H1 (cell line): ENCODE measurements at regions of chr1 and their contacts with region 1.

Region 1: DNA sequence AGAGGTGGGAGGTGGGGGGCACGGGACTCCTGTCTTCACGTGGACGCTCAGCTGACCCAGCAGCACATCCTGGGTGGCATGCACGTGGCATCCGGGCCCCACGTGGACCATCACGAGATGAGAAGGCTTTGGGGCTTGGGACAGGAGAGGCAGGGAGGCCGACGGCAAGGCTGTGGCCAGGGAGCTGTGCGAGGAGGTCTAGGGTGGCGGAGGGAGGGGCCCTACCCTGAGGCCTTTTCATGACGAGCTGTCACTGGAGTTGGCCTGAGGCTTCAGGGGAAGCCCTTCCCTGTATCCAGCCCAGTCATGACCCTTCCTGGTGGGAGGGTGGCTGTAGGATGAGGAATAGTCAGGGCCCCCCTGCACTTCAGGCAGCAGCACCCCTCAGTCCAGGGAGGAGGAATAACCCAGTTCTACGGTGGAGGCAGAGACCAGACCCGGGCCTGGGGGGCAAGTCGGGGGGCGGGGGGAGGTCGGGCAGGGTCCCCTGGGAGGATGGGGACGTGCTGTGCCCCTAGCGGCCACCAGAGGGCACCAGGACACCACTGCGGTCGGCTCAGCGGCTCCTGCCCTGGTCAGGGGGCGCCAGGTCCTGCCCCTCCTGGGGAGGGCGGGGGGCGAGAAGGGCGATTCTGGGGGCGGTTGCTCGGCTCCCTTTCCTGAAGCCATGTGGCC is 2.0 kb upstream of the PERM1 start:
- DNase-seq: peak in 1 of 2 experiments; percentile 92
- H3K4me3 ChIP-seq: no peak overlapping the region
- H3K27ac ChIP-seq: no peak overlapping the region
- H3K4me1 ChIP-seq: no peaks in the 10 kb centered on the region; a peak in 1 of 7 replicates
- H3K27me3 ChIP-seq: peaks cover 0 to 29% (median 17%) of the 10 kb centered on the region in 4 experiments; a peak in 6 of 7 replicates
- CTCF ChIP-seq: peak in 2 of 3 experiments; percentile 59 to 84; a peak in 3 of 4 replicates
- EP300 ChIP-seq: no peak
- POLR2A ChIP-seq: no peak
- RAD21 ChIP-seq: peak; percentile 80 to 83

Region 2: DNA sequence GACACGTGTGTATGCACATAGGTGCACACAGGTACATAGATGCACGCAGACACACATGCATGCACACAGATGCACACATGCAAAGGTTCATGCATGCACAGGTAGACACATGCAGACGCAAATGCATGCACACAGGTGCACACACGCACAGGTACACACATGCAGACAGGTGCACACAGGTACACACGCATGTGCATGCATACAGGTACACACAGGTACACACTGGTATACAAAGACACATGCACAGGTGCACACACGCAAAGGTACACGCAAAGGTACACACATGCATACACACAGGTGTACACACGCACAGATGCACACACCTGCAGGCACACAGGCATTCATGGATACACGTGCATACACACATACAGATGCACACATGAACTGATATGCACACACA is 33.7 kb before region 1 on chr1:
- CTCF ChIA-PET with region 1: no interaction called
- POLR2A ChIA-PET with region 1: no interaction called
- DNase-seq: no peak
- H3K4me3 ChIP-seq: no peak overlapping the region
- H3K27ac ChIP-seq: no peak overlapping the region
- H3K4me1 ChIP-seq: no peaks in the 10 kb centered on the region; a peak in 1 of 7 replicates
- H3K27me3 ChIP-seq: no peaks in the 10 kb centered on the region
- CTCF ChIP-seq: no peak
- EP300 ChIP-seq: no peak
- POLR2A ChIP-seq: no peak
- RAD21 ChIP-seq: no peak

Region 3: GRCh38 chr1:999725-1000356 is 15.9 kb after region 1 on chr1 and contains the start of gene HES4:
- CTCF ChIA-PET with region 1: interaction called, 86 read pairs
- POLR2A ChIA-PET with region 1: interaction called, 9 read pairs
- DNase-seq: peak in 1 of 2 experiments; percentile 93
- H3K4me3 ChIP-seq: peak within 1 kb of the TSS; percentile 34 to 77 (median 48)
- H3K27ac ChIP-seq: no peak within 1 kb of the TSS
- H3K4me1 ChIP-seq: peaks cover 0 to 31% (median 15%) of the 10 kb centered on the region in 4 experiments; a peak in 6 of 7 replicates
- H3K27me3 ChIP-seq: peaks cover 47 to 89% (median 73%) of the 10 kb centered on the region in 4 experiments
- CTCF ChIP-seq: no peak
- EP300 ChIP-seq: no peak
- POLR2A ChIP-seq: no peak
- RAD21 ChIP-seq: no peak
- total RNA-seq, gene HES4: 1.2 and 2.8 TPM in 2 replicates

Region 4: DNA sequence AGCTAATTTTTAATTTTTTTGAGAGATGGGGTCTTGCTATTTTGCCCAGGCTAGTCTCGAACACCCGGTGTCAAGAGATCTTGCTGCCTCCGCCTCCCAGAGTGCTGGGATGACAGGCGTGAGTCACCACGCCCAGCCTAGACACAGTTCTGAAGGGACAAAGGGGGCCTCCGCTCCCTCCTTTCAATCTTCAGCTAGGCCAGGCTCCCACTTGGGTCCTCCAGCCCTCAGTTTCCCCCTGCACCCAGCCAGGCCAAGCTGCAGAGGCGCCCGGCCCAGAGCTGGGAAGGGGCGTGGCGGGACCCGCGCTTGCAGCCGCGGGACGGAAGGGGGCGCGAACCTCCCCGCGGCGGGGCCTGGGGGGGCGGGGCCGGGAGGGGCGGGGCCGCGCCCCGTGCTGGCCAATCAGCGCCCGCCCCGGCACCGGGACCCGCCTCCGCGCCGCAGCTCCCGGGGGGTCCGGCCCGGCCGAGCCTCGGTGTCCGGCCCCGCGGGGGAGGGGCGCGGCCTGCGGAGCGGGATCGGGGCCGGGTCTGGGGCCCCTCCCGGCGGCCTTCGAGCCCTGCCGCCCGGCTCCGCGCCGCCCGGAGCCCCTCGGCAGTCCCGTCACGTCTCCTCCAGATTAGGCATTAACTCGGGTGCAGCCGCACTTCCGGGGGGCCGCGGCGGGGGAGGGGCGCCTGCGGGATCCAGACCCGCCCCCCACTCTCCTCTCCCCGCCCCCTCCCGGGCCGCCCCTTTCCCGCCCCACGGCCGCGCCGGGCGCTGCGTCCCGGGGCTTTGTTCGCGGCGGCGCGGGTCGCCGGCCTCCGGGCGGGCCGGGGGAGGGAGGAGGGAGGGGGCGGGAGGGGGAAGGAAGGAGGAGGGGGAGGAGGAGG is 35.4 kb after region 1 on chr1:
- CTCF ChIA-PET with region 1: interaction called, 74 read pairs
- POLR2A ChIA-PET with region 1: interaction called, 4 read pairs
- DNase-seq: peak in 1 of 2 experiments; percentile 84
- H3K4me3 ChIP-seq: peak overlapping the region in 2 of 4 experiments; percentile 45 to 83; a peak in 2 of 8 replicates
- H3K27ac ChIP-seq: no peak overlapping the region; the same call in 1 of the 2 replicates
- H3K4me1 ChIP-seq: peaks cover 2 to 36% (median 27%) of the 10 kb centered on the region in 4 experiments
- H3K27me3 ChIP-seq: no peaks in the 10 kb centered on the region
- CTCF ChIP-seq: peak in 2 of 3 experiments; percentile 38 to 42; a peak in 2 of 4 replicates
- EP300 ChIP-seq: no peak
- POLR2A ChIP-seq: no peak; a peak in 1 of 3 replicates
- RAD21 ChIP-seq: no peak

Region 5: DNA sequence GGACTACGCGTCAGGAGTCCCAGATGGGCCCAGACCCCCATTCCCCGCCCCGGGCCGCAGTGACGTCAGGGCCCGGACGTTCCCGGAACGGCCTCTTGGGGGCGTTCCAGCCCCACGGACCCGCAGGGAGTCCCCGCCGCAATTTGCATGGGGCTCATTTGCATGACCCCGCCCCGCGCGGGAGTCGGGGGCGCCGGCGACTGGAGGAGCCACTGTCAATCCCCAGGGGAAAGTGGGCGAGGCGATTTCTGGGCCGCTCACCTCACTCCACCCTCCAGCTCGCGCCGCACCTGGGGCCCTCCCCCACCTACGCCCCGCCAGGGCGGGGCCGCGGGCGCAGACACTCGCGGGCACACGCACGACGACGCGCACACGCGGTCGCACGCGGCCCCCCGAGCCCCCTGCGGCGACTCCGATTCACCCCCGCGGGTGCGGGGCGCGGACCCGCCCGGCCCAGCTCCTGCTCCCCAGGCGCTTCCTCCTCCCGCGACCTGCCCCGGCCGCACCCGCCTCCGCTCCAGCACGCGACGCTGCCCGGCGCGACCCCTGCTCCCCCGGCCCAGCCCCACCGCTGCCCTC is 49.2 kb after region 1 on chr1:
- CTCF ChIA-PET with region 1: interaction called, 51 read pairs
- POLR2A ChIA-PET with region 1: interaction called, 4 read pairs
- DNase-seq: peak; percentile 81 to 97
- H3K4me3 ChIP-seq: peak overlapping the region; percentile 32 to 67 (median 36); a peak in 5 of 8 replicates
- H3K27ac ChIP-seq: no peak overlapping the region
- H3K4me1 ChIP-seq: peaks cover 0 to 23% (median 11%) of the 10 kb centered on the region in 4 experiments; a peak in 6 of 7 replicates
- H3K27me3 ChIP-seq: peaks cover 0 to 18% (median 14%) of the 10 kb centered on the region in 4 experiments; a peak in 5 of 7 replicates
- CTCF ChIP-seq: peak in 2 of 3 experiments; percentile 75 to 76; a peak in 3 of 4 replicates
- EP300 ChIP-seq: peak in 1 of 2 experiments; percentile 47; a peak in 1 of 3 replicates
- POLR2A ChIP-seq: peak in 1 of 2 experiments; percentile 45; a peak in 1 of 3 replicates
- RAD21 ChIP-seq: peak; percentile 75 to 79

Region 6: GRCh38 chr1:1040004-1040991 is 56.4 kb after region 1 on chr1:
- CTCF ChIA-PET with region 1: interaction called, 33 read pairs
- POLR2A ChIA-PET with region 1: interaction called, 3 read pairs
- DNase-seq: peak in 1 of 2 experiments; percentile 76
- H3K4me3 ChIP-seq: peak overlapping the region; percentile 11 to 63 (median 30); a peak in 7 of 8 replicates
- H3K27ac ChIP-seq: no peak overlapping the region
- H3K4me1 ChIP-seq: peaks cover 0 to 10% (median 2%) of the 10 kb centered on the region in 4 experiments; a peak in 4 of 7 replicates
- H3K27me3 ChIP-seq: peaks cover 0 to 29% (median 21%) of the 10 kb centered on the region in 4 experiments; a peak in 5 of 7 replicates
- CTCF ChIP-seq: peak in 2 of 3 experiments; percentile 1 to 28; a peak in 3 of 4 replicates
- EP300 ChIP-seq: no peak
- POLR2A ChIP-seq: no peak
- RAD21 ChIP-seq: peak in 1 of 2 experiments; percentile 27; a peak in 1 of 4 replicates

Region 7: GRCh38 chr1:1059494-1060280 is 75.8 kb after region 1 on chr1:
- CTCF ChIA-PET with region 1: interaction called, 80 read pairs
- POLR2A ChIA-PET with region 1: interaction called, 5 read pairs
- DNase-seq: peak in 1 of 2 experiments; percentile 98
- H3K4me3 ChIP-seq: peak overlapping the region; percentile 43 to 76 (median 48)
- H3K27ac ChIP-seq: no peak overlapping the region
- H3K4me1 ChIP-seq: peaks cover 0 to 18% (median 11%) of the 10 kb centered on the region in 4 experiments; a peak in 5 of 7 replicates
- H3K27me3 ChIP-seq: peaks cover 9 to 49% (median 34%) of the 10 kb centered on the region in 4 experiments
- CTCF ChIP-seq: no peak
- EP300 ChIP-seq: no peak
- POLR2A ChIP-seq: no peak
- RAD21 ChIP-seq: no peak

Region 8: GRCh38 chr1:1122078-1122811 is 138.3 kb after region 1 on chr1:
- CTCF ChIA-PET with region 1: interaction called, 10 read pairs
- POLR2A ChIA-PET with region 1: no interaction called
- DNase-seq: peak; percentile 47 to 94
- H3K4me3 ChIP-seq: no peak overlapping the region
- H3K27ac ChIP-seq: no peak overlapping the region
- H3K4me1 ChIP-seq: peaks cover 0 to 3% (median 2%) of the 10 kb centered on the region in 4 experiments; a peak in 4 of 7 replicates
- H3K27me3 ChIP-seq: peaks cover 2 to 16% (median 13%) of the 10 kb centered on the region in 4 experiments; a peak in 6 of 7 replicates
- CTCF ChIP-seq: peak in 2 of 3 experiments; percentile 91 to 95; a peak in 3 of 4 replicates
- EP300 ChIP-seq: no peak
- POLR2A ChIP-seq: no peak
- RAD21 ChIP-seq: peak; percentile 97 to 98